Activated T-helper 1 cell treated with anti-CD3 and anti-CD28 coated beads, Interleukin-12 subunit alpha, Interleukin-12 subunit beta, Interleukin-2, Interleukin-4 antibody, amounts not matched to agents 30 ng/mL and 10 ng/mL and 1 ng/mL, durations not matched to agents 14 hours and 24 hours and 36 hours (primary cell): ENCODE measurements at regions of chr6 and their contacts with region 1.

Region 1: GRCh38 chr6:93124006-93124634 is 295.2 kb downstream of the EPHA7 start:
- DNase-seq: no peak
- H3K4me3 Mint-ChIP-seq: no peak overlapping the region
- H3K27ac Mint-ChIP-seq: no peak overlapping the region
- H3K4me1 Mint-ChIP-seq: no peaks in the 10 kb centered on the region
- H3K27me3 Mint-ChIP-seq: no peaks in the 10 kb centered on the region

Region 2: DNA sequence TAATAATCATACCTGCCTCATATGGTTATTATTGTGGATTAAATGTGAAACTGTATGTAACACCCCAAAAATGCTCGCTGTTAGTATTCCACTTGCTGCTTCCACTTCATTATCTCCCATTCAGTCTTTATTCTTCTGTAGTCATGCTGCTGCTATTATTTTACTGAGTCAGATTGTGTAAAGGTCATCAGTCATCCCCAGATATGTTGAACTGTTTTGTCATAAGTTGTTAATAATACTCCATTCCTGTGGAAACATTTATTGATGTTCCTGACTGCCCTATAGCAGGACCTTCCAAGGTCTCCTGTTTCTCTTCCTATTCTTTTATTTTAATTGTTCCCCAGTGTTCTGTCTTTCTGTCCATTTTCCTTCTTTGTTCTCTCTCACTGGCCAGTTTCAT is 853.0 kb before region 1 on chr6:
- intact Hi-C with region 1: no loop called
- DNase-seq: no peak
- H3K4me3 Mint-ChIP-seq: no peak overlapping the region
- H3K27ac Mint-ChIP-seq: no peak overlapping the region
- H3K4me1 Mint-ChIP-seq: no peaks in the 10 kb centered on the region
- H3K27me3 Mint-ChIP-seq: no peaks in the 10 kb centered on the region

Region 3: GRCh38 chr6:93371756-93372155 is 247.6 kb after region 1 on chr6:
- intact Hi-C with region 1: loop called (anchors 5 kb)
- DNase-seq: no peak
- H3K4me3 Mint-ChIP-seq: no peak overlapping the region
- H3K27ac Mint-ChIP-seq: no peak overlapping the region
- H3K4me1 Mint-ChIP-seq: no peaks in the 10 kb centered on the region
- H3K27me3 Mint-ChIP-seq: no peaks in the 10 kb centered on the region